Left cardiac atrium (tissue), 4 donors: ENCODE measurements at regions of chr13 and their contacts with region 1.

Region 1: DNA sequence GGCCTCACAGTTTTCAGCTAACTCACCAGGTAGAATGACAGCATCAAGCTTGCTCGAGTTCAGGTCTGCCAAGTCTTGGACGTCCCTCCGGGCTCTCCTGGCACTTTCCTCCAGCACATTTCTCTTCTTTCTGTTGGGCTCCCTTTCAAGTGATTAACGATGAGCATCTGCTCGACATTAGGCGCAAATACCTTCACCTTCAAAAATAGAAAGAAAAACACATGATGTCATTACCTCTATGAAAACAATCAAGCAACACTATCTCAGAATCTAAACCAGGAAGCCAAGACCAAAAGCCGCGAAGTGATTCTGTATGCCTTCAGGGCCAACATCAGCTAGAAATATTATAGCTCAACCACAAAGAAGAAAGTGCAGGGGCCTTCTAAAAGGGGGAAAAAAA is 15.4 kb upstream of the CLN5 start:
- DNase-seq: no peak
- ATAC-seq: no peak

Region 2: GRCh38 chr13:75876360-75877050 is 1100.0 kb before region 1 on chr13:
- intact Hi-C with region 1: loop called in 1 of 2 experiments (anchors 10 kb)
- DNase-seq: peak; percentile 50
- ATAC-seq: peak; percentile 90 to 93

Region 3: DNA sequence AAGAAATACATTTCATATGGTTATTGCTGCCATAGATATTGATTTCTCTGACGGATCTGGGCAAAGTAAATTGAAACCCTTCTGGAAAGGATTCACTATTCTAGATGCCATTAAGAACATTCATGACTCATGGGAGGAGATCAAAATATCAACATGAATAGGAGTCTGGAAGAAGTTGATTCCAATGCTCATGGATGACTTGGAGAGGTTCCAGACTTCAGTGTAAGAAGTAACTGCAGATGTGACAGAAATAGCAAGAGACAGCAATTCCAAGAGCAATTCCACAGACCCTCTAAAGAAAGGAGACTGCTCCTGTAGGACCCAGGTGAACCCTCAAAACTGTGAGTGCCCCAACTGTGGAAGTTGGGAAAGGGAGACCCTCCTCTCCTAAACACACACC is 59.4 kb before region 1 on chr13:
- intact Hi-C with region 1: no loop called
- DNase-seq: no peak
- ATAC-seq: no peak